Activated CD4-positive, alpha-beta memory T cell treated with anti-CD3 and anti-CD28 coated beads, Interleukin-2, amount 10 ng/mL, durations not matched to agents 7 days and 5 days (primary cell): ENCODE measurements at regions of chr10 and their contacts with region 1.

Region 1: GRCh38 chr10:11165591-11166543 is 148.2 kb downstream of the CELF2 start:
- DNase-seq: peak; percentile 82
- H3K4me3 Mint-ChIP-seq: no peak overlapping the region
- H3K27ac Mint-ChIP-seq: peak overlapping the region; percentile 100
- H3K4me1 Mint-ChIP-seq: peaks cover 32% of the 10 kb centered on the region
- H3K27me3 Mint-ChIP-seq: no peaks in the 10 kb centered on the region

Region 2: GRCh38 chr10:11097686-11098085 is 68.2 kb before region 1 on chr10:
- CTCF ChIA-PET with region 1: interaction called, 15 read pairs
- POLR2A ChIA-PET with region 1: interaction called, 5 read pairs
- DNase-seq: no peak
- H3K4me3 Mint-ChIP-seq: no peak overlapping the region
- H3K27ac Mint-ChIP-seq: no peak overlapping the region
- H3K4me1 Mint-ChIP-seq: no peaks in the 10 kb centered on the region
- H3K27me3 Mint-ChIP-seq: peaks cover 28% of the 10 kb centered on the region

Region 3: DNA sequence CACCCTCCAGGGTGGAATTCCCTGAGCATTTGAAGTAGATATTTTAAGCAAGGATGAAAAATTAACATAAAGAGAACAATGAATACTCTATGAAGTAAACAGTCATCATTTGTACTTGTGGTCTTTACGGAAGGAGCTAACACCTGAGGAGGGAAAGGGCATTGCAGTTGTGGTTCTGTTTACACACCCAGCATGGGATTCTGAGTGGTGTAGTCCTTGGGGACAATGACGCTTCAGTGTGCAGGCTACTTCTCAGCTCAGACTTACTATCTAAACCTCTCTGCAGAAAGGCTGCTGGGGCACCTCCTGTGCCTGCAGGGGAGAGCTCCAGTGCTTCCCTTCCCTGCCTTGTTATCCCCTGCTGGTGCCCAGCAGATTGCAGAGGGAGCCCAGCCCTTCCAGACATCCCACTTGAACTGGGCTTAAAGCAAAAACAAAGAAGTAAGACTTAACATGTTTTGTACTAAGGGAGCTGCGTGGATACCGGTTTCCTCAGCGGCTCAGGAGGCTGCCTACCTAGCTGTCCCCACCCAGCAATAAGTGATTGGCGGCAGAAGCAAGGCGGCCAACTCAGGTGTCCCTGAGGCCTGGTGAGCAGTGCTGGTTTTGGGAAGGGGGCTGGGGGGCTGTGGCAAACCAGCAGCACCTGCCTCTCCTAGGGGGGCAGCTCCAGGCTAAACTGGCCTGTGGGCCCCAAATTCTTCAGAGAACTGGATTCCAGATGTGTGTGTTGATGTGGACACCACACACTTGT is 59.1 kb before region 1 on chr10:
- CTCF ChIA-PET with region 1: interaction called, 15 read pairs
- POLR2A ChIA-PET with region 1: interaction called, 72 read pairs
- DNase-seq: no peak
- H3K4me3 Mint-ChIP-seq: no peak overlapping the region
- H3K27ac Mint-ChIP-seq: no peak overlapping the region
- H3K4me1 Mint-ChIP-seq: peaks cover 20% of the 10 kb centered on the region
- H3K27me3 Mint-ChIP-seq: peaks cover 13% of the 10 kb centered on the region

Region 4: DNA sequence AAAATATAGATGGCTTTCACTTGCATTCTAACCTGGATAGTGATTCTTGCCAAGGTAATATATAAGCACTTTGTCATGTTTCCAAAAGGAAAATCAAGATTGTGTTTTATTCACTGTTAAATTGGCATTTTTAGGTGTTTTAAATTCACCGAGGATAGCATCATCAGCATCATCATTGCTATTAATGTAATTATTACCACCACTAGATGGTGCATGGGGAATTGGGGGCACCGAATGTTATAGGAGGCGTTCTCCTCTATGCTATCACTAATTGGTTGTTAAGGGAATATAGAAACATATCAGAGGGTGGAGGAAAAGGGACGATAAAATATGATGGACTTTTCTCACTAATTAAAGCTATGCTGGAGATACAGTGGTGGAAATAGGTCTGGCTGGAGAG is 52.7 kb before region 1 on chr10:
- CTCF ChIA-PET with region 1: interaction called, 13 read pairs
- POLR2A ChIA-PET with region 1: interaction called, 72 read pairs
- DNase-seq: no peak
- H3K4me3 Mint-ChIP-seq: no peak overlapping the region
- H3K27ac Mint-ChIP-seq: no peak overlapping the region
- H3K4me1 Mint-ChIP-seq: peaks cover 15% of the 10 kb centered on the region
- H3K27me3 Mint-ChIP-seq: peaks cover 4% of the 10 kb centered on the region

Region 5: DNA sequence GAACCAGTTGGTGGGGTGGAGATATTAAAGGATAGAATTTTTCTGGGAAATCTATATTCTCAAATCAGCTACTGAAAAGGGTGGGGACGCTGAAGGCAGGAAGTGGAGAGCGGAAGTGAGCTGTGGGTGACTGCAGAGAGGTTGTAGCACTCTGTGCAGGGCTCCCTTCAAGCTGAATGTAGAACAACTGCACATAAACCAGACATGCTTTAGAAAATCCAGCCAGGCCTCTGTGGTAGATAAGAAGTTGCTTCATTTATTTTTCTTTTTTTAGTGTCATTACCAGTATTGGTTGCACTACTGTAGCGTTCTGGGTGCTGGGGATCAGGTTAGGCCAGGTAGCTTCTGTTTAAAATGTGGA is 20.4 kb before region 1 on chr10:
- CTCF ChIA-PET with region 1: interaction called, 85 read pairs
- POLR2A ChIA-PET with region 1: interaction called, 1,515 read pairs
- DNase-seq: peak; percentile 82
- H3K4me3 Mint-ChIP-seq: peak overlapping the region; percentile 60
- H3K27ac Mint-ChIP-seq: peak overlapping the region; percentile 93
- H3K4me1 Mint-ChIP-seq: peaks cover 94% of the 10 kb centered on the region
- H3K27me3 Mint-ChIP-seq: no peaks in the 10 kb centered on the region

Region 6: GRCh38 chr10:11225935-11226334 is 60.1 kb after region 1 on chr10:
- CTCF ChIA-PET with region 1: interaction called, 4 read pairs
- POLR2A ChIA-PET with region 1: interaction called, 106 read pairs
- DNase-seq: peak; percentile 74
- H3K4me3 Mint-ChIP-seq: no peak overlapping the region
- H3K27ac Mint-ChIP-seq: peak overlapping the region; percentile 89
- H3K4me1 Mint-ChIP-seq: peaks cover 93% of the 10 kb centered on the region
- H3K27me3 Mint-ChIP-seq: no peaks in the 10 kb centered on the region

Region 7: GRCh38 chr10:11236234-11236633 is 70.4 kb after region 1 on chr10:
- CTCF ChIA-PET with region 1: no interaction called
- POLR2A ChIA-PET with region 1: interaction called, 106 read pairs
- DNase-seq: peak; percentile 52
- H3K4me3 Mint-ChIP-seq: peak overlapping the region; percentile 18
- H3K27ac Mint-ChIP-seq: peak overlapping the region; percentile 71
- H3K4me1 Mint-ChIP-seq: peaks cover 89% of the 10 kb centered on the region
- H3K27me3 Mint-ChIP-seq: no peaks in the 10 kb centered on the region